ENCODE measurements at regions of chr16 and their contacts with region 1.

Region 1: GRCh38 chr16:3879887-3880564 is 487 bp downstream of the CREBBP start:
- DNase-seq: peak; percentile 25
- H3K4me3 ChIP-seq: peak overlapping the region; percentile 82
- H3K27ac ChIP-seq: peak overlapping the region; percentile 69
- H3K27me3 ChIP-seq: no peaks in the 10 kb centered on the region
- CTCF ChIP-seq: peak; percentile 25

Region 2: DNA sequence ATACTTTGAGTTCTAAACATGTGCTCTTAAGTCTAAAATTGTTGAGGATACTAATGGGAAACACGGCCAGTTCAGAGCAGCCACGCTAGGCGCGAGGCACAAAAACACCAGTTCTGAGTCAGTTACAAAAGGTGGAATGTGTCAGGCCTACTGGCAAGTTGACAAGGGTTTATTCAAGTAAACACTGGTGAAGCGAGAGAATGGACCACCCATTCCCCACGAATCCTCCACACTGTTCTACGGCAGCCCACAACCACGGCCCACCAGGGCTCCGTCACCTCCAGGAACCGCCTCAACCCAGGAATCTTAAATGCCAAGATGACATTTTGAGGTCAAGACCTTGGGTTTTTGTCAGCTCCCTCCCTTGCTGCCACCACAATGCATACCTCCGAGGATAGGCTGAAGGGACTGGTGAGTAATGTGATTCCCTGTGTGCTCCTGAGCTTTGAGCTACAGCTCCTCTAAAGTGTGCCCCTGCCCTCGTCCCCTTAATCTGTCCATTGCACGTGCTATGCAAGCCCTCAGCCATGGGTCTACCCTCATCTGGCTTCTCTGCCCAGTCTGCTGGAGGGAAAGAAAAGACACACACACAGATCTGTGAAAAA is 134.2 kb before region 1 on chr16:
- in situ Hi-C with region 1: loop called (anchors 10 kb)
- DNase-seq: no peak
- H3K4me3 ChIP-seq: no peak overlapping the region
- H3K27ac ChIP-seq: no peak overlapping the region
- H3K27me3 ChIP-seq: no peaks in the 10 kb centered on the region
- CTCF ChIP-seq: no peak

Region 3: DNA sequence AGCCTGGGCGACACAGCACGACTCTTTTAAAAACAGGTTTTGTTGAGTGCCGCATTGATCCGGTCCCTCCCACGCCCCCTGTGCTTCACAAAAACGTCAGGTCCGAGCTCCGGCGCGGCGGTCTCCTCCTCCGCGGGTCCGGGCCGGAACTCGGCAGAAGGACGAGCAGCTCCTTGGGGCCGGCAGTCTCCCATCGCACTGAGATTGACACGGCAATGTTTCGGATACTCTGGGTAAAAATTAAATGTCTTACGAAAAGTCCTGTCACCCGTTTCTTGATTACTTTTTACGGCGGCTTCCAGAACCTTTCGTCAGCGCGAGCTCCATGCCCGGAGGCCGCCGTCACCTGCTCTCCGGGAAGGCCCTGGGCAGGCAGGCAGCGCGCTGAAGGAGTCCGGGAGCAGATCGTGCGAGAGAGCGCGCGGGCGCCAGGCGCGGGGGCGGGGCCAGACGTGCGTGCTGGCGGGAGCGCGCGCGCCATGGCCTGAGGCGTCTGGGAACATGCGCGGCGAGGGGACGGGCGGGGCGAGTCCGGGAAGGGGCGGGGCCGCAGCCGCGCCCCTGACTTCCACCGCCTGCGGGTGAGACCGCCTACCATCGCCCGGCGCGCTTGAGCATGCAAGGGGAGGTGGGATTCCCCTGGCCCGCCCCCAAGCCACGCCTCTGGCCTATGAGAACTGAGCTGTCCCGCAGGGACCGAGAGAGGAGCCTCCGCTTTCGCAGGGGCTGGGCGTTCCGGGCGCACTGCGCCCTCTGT is 373.5 kb after region 1 on chr16:
- in situ Hi-C with region 1: no loop called
- DNase-seq: peak; percentile 99
- H3K4me3 ChIP-seq: peak overlapping the region; percentile 62
- H3K27ac ChIP-seq: peak overlapping the region; percentile 50
- H3K27me3 ChIP-seq: no peaks in the 10 kb centered on the region
- CTCF ChIP-seq: no peak